ENCODE measurements at regions of chr15 and their contacts with region 1.

Region 1: GRCh38 chr15:56886932-56887781 is 31.3 kb upstream of the TCF12 start:
- DNase-seq: peak; percentile 96
- H3K4me3 ChIP-seq: peak overlapping the region; percentile 78
- H3K27ac ChIP-seq: peak overlapping the region; percentile 99
- H3K4me1 ChIP-seq: peaks cover 28% of the 10 kb centered on the region
- H3K27me3 ChIP-seq: no peaks in the 10 kb centered on the region
- CTCF ChIP-seq: peak; percentile 7

Region 2: GRCh38 chr15:56815247-56815646 is 71.9 kb before region 1 on chr15:
- intact Hi-C with region 1: no loop called
- DNase-seq: no peak
- H3K4me3 ChIP-seq: no peak overlapping the region
- H3K27ac ChIP-seq: peak overlapping the region; percentile 66
- H3K4me1 ChIP-seq: peaks cover 44% of the 10 kb centered on the region
- H3K27me3 ChIP-seq: no peaks in the 10 kb centered on the region
- CTCF ChIP-seq: no peak

Region 3: DNA sequence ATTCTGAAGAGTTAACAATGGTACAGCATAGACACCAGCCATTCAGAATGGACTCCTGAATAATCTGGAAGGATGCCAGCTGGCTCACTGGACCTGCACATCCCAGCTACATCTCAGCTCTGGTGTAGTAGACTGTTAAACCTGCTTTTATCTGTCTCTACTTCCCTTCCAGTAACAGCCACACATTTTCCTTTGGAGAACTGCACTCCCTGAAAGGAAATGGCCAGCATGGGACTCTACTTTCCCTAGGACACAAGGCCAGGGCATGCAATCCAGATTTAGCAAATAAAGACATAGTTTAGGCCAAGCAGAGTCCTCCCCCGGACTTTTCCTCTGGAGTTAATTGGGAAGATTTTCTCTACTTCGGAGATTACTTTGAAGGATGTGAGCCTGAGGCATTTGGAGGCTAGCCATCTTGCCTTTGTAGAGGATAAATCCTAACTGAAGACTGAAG is 51.4 kb before region 1 on chr15:
- intact Hi-C with region 1: no loop called
- DNase-seq: no peak
- H3K4me3 ChIP-seq: no peak overlapping the region
- H3K27ac ChIP-seq: no peak overlapping the region
- H3K4me1 ChIP-seq: peaks cover 16% of the 10 kb centered on the region
- H3K27me3 ChIP-seq: no peaks in the 10 kb centered on the region
- CTCF ChIP-seq: no peak

Region 4: DNA sequence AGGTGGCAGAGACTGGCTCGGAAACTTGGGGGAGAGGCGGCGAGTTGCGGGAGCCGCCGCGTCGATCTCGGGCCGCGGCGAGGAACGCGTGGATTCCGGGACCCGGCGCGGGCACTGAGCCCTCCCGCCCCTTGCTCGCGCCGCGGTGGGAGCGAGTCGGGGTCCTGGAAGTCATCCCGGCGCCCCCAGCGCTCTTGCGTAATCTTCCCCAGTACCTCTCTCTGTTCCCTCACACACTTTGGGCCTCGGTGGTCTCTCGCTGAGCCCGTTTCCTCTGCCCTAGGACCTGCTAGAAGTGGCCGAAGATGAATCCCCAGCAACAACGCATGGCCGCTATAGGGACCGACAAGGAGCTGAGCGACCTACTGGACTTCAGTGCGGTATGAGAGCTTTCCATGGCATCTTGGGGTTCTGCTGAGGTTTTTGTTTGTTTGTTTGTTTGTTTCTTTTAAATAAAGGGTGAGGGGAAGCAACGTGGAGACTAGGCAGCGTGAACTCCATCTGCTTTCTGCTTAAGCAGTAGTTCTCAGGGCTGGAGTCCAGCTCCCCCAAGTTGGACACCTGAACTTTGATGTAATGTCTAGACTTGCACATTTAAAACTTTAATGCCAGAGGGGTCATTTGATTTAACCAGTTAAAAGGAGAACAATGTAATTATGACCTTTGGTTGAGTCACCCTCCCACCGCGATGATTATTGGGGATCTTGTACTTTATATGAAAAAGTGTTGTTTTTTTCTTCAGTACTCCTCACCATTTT is 32.6 kb after region 1 on chr15:
- intact Hi-C with region 1: loop called (anchors 5 kb)
- DNase-seq: peak; percentile 19
- H3K4me3 ChIP-seq: peak overlapping the region; percentile 91
- H3K27ac ChIP-seq: peak overlapping the region; percentile 97
- H3K4me1 ChIP-seq: peaks cover 79% of the 10 kb centered on the region
- H3K27me3 ChIP-seq: no peaks in the 10 kb centered on the region
- CTCF ChIP-seq: no peak

Region 5: GRCh38 chr15:57045741-57046382 is 158.7 kb after region 1 on chr15:
- intact Hi-C with region 1: no loop called
- DNase-seq: no peak
- H3K4me3 ChIP-seq: no peak overlapping the region
- H3K27ac ChIP-seq: no peak overlapping the region
- H3K4me1 ChIP-seq: peaks cover 46% of the 10 kb centered on the region
- H3K27me3 ChIP-seq: no peaks in the 10 kb centered on the region
- CTCF ChIP-seq: no peak

Measured in left ventricle myocardium inferior (tissue), 1 donor.